Activated T-helper 1 cell treated with anti-CD3 and anti-CD28 coated beads, Interleukin-12 subunit alpha, Interleukin-12 subunit beta, Interleukin-2, Interleukin-4 antibody, amounts not matched to agents 30 ng/mL and 10 ng/mL and 1 ng/mL, durations not matched to agents 14 hours and 24 hours and 36 hours (primary cell): ENCODE measurements at regions of chr12 and their contacts with region 1.

Region 1: DNA sequence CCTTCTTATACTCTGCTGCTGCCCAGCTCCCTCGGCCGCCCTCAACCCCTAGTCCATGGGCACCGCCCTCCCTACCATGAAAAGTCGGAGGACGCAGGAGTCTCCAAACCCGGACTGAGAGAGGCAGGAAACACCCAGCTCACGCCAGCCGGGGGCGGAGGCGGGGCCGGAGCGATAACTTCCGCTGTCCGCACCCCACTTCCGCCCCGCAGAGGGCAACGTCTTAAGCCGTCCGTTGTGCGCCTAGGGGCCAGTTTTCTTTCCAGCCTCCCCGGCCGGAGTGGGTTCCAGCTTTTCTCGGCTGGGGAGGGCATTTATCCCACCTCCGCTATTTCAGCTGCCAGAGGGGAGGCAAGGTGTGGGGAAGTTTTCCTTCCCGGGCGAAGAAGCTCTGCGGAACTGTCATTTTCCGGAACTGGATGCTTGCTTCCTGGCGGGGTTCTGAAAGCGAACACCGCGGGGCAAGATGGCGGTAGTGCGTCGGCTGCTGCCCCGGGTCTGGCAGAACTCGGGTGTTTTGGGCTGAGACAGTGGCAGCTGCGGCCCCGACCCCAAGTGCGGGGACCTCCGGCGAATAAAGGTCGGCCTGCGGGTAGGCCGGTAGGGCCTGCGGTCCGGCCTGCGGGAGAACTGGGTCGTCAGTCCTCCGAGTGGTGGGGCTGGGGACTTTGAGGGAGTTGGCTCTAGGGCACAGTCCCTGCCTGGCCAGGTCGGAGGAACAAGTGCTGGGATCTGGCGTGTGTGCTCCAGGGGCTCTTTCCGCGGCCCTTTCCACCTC is at the starts of genes KCTD10 and UBE3B:
- DNase-seq: peak; percentile 84
- H3K4me3 Mint-ChIP-seq: peak within 1 kb of the TSS; percentile 94
- H3K27ac Mint-ChIP-seq: peak within 1 kb of the TSS; percentile 98
- H3K4me1 Mint-ChIP-seq: peaks cover 40% of the 10 kb centered on the region
- H3K27me3 Mint-ChIP-seq: no peaks in the 10 kb centered on the region
- total RNA-seq, gene KCTD10: 48.3 and 51.2 TPM in 2 replicates
- total RNA-seq, gene UBE3B: 28.7 and 29.3 TPM in 2 replicates

Region 2: GRCh38 chr12:109052414-109053323 is 424.7 kb before region 1 on chr12 and contains the start of gene USP30:
- intact Hi-C with region 1: loop called (anchors 10 kb)
- DNase-seq: peak; percentile 77
- H3K4me3 Mint-ChIP-seq: peak within 1 kb of the TSS; percentile 92
- H3K27ac Mint-ChIP-seq: peak within 1 kb of the TSS; percentile 92
- H3K4me1 Mint-ChIP-seq: peaks cover 19% of the 10 kb centered on the region
- H3K27me3 Mint-ChIP-seq: no peaks in the 10 kb centered on the region
- total RNA-seq, gene USP30: 9.0 and 10.5 TPM in 2 replicates

Region 3: DNA sequence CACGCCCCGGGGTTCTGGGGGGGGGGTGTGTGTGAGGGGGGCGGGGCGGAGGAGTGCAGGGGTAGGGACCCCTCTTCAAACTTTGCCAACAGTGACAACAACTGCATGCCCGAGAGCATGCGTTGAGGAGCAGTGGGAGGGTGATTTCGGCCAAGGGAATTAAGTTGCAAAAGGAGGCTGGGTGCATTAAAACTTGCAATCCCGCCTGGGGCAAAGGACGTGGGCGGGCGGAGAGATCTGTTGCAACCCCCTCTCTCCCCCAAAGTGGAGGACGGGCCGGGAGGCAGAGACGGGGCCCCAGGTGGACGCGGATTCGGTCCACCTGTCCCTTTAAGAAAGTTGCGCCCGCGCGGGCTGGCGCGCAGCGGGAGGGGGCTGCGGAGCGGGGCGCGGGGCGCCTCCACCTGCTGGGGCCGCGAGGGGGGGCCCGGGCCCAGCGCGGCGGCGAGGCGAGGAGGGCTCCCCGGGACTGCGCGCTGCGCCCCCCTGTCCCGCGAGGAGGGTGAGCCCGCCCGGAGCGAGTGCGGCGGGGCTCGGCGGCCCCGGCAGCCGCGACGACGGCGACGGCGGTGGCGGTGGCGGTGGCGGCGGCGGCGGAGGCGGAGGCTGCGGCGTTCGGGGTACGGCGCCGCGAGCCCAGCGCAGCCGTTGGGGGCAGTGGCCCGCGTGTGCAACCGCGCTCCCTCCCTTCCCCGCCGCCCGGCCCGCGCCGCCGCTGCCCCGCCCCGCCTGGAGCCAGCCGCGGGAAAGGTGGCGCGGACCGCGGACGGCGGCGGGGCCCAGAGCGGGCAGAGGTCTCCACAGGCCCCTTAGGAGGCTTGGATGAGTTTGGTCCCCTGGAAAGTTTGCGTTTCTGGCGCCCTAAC is 167.8 kb before region 1 on chr12:
- intact Hi-C with region 1: no loop called
- DNase-seq: no peak
- H3K4me3 Mint-ChIP-seq: peak overlapping the region; percentile 74
- H3K27ac Mint-ChIP-seq: no peak overlapping the region
- H3K4me1 Mint-ChIP-seq: peaks cover 8% of the 10 kb centered on the region
- H3K27me3 Mint-ChIP-seq: peaks cover 68% of the 10 kb centered on the region

Region 4: GRCh38 chr12:109428037-109428629 is 49.2 kb before region 1 on chr12:
- intact Hi-C with region 1: loop called (anchors 2 kb)
- DNase-seq: peak; percentile 57
- H3K4me3 Mint-ChIP-seq: no peak overlapping the region
- H3K27ac Mint-ChIP-seq: no peak overlapping the region
- H3K4me1 Mint-ChIP-seq: peaks cover 8% of the 10 kb centered on the region
- H3K27me3 Mint-ChIP-seq: peaks cover 2% of the 10 kb centered on the region

Region 5: DNA sequence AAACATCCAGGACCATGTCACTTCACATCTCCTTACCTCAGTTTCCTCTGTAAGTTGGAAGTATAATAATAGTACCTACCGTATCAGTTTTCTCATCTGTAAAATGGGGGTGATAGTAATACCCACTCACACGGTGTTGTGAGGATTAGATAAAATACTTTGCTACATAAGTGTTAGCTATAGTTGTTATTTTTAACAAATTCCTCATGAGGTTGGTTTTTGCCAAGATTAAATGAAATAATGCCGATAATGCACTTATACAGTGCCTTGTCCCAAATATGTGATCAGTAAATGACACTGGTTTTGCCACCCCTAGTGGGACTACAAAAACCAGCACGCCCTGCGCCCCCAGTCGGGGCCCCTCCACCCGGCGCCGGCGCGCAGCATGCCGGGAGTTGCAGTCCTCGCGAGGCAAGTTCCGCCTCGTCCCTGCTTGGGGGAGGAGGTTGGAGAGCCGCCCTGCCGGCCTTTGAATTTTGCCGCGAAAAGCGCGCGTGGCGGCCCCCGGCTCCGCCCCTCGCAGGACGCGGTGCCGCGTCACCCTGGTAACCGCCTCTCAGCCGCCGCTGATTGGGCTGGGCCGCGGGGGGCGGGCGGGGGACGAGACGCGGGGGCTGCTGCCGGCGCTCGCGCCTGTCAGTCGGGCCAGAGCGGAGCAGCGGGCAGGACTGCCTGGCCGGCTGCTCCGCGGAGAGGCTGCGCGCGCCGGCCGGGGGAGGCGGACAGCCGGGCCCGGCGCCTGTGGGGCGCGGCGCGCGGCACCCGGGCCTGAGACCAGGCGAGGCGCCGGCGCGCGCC is 236.0 kb after region 1 on chr12 and contains the start of gene FAM222A:
- intact Hi-C with region 1: loop called (anchors 1 kb)
- DNase-seq: peak; percentile 94
- H3K4me3 Mint-ChIP-seq: no peak within 1 kb of the TSS
- H3K27ac Mint-ChIP-seq: no peak within 1 kb of the TSS
- H3K4me1 Mint-ChIP-seq: no peaks in the 10 kb centered on the region
- H3K27me3 Mint-ChIP-seq: peaks cover 62% of the 10 kb centered on the region
- total RNA-seq, gene FAM222A: 2.4 TPM in 2 replicates

Region 6: GRCh38 chr12:110124184-110124995 is 647.0 kb after region 1 on chr12 and contains the start of gene IFT81:
- intact Hi-C with region 1: no loop called
- DNase-seq: peak; percentile 93
- H3K4me3 Mint-ChIP-seq: peak within 1 kb of the TSS; percentile 88
- H3K27ac Mint-ChIP-seq: peak within 1 kb of the TSS; percentile 83
- H3K4me1 Mint-ChIP-seq: no peaks in the 10 kb centered on the region
- H3K27me3 Mint-ChIP-seq: peaks cover 29% of the 10 kb centered on the region
- total RNA-seq, gene IFT81: 0.91 and 1.2 TPM in 2 replicates

Region 7: GRCh38 chr12:110361216-110361615 is 883.8 kb after region 1 on chr12:
- intact Hi-C with region 1: no loop called
- DNase-seq: no peak
- H3K4me3 Mint-ChIP-seq: no peak overlapping the region
- H3K27ac Mint-ChIP-seq: no peak overlapping the region
- H3K4me1 Mint-ChIP-seq: no peaks in the 10 kb centered on the region
- H3K27me3 Mint-ChIP-seq: no peaks in the 10 kb centered on the region

Region 8: GRCh38 chr12:110583137-110584059 is 1106.0 kb after region 1 on chr12 and contains the start of gene PPTC7:
- intact Hi-C with region 1: loop called (anchors 5 kb)
- DNase-seq: peak; percentile 93
- H3K4me3 Mint-ChIP-seq: peak within 1 kb of the TSS; percentile 95
- H3K27ac Mint-ChIP-seq: peak within 1 kb of the TSS; percentile 96
- H3K4me1 Mint-ChIP-seq: peaks cover 61% of the 10 kb centered on the region
- H3K27me3 Mint-ChIP-seq: peaks cover 3% of the 10 kb centered on the region
- total RNA-seq, gene PPTC7: 57.9 and 59.1 TPM in 2 replicates